ENCODE measurements at regions of chr6 and their contacts with region 1.

Region 1: DNA sequence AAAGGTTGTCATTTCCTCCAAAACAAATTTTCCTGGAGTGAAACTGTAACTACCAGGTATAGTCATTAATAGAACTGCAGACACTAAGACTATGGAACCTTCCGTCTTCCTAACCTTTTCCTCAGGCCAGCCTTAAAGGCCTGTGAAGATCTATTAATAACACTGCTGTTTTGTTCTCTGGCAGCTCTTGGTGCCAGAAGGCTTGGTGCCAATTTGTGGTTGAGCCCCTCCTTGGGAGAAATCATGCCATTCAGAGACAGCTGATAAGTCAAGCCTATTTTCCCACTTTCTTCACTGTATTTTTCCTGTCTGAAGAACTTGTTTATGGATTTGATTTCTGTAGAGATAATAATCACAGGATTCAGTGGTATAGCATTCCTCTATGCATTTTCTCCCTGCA is 64.8 kb downstream of the HCRTR2 start:
- DNase-seq: peak in 1 of 2 donors; percentile 9
- ATAC-seq: no peak
- H3K4me3 ChIP-seq: no peak overlapping the region
- H3K27ac ChIP-seq: no peak overlapping the region
- H3K4me1 ChIP-seq: peaks cover 0 to 7% (median 0%) of the 10 kb centered on the region in 9 donors
- H3K27me3 ChIP-seq: no peaks in the 10 kb centered on the region
- CTCF ChIP-seq: no peak

Region 2: GRCh38 chr6:53979468-53980067 is 1259.5 kb before region 1 on chr6:
- intact Hi-C with region 1: loop called in 7 of 10 experiments (anchors 5 to 10 kb)
- DNase-seq: no peak
- ATAC-seq: no peak
- H3K4me3 ChIP-seq: no peak overlapping the region
- H3K27ac ChIP-seq: no peak overlapping the region
- H3K4me1 ChIP-seq: peaks cover 0 to 12% (median under 1%) of the 10 kb centered on the region in 9 donors
- H3K27me3 ChIP-seq: no peaks in the 10 kb centered on the region
- CTCF ChIP-seq: peak; percentile 60 to 91 (median 86)

Region 3: DNA sequence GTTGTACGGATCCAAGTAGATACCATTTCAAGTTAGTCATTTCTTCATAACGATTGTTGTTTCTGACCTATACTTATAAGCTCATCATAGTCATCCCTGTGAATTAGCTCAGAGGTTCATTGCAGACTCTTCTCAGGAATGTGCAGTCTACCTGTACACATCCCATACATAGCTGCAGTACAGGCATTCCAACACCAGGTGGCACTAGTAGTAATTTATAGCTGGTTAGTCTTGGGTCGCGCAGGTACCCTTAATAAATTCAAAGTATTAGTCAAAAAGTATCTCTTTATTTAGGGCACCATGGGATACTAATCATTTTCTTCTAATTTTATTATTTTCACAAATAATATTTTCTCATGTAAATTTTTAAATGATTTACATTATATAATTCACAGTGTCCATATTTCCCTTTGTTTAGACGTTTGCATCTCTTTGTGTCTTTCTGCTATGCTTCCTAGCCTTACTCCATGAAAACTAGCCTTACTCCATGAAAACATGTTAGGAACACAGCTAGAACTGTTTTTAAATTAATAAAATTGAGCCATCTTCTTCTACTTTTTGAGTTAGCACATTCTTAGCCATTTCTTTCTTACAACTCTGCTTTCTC is 521.1 kb before region 1 on chr6:
- intact Hi-C with region 1: loop called in 1 of 10 experiments (anchors 10 kb)
- DNase-seq: peak in 1 of 2 donors; percentile 52
- ATAC-seq: peak in 3 of 8 donors; percentile 42 to 56 (median 53)
- H3K4me3 ChIP-seq: no peak overlapping the region
- H3K27ac ChIP-seq: no peak overlapping the region
- H3K4me1 ChIP-seq: no peaks in the 10 kb centered on the region
- H3K27me3 ChIP-seq: no peaks in the 10 kb centered on the region
- CTCF ChIP-seq: peak; percentile 58 to 87 (median 77)

Region 4: GRCh38 chr6:55198708-55199107 is 40.4 kb before region 1 on chr6:
- intact Hi-C with region 1: no loop called
- DNase-seq: no peak
- ATAC-seq: no peak
- H3K4me3 ChIP-seq: no peak overlapping the region
- H3K27ac ChIP-seq: no peak overlapping the region
- H3K4me1 ChIP-seq: no peaks in the 10 kb centered on the region
- H3K27me3 ChIP-seq: no peaks in the 10 kb centered on the region
- CTCF ChIP-seq: no peak